ENCODE measurements at regions of chr13 and their contacts with region 1.

Region 1: DNA sequence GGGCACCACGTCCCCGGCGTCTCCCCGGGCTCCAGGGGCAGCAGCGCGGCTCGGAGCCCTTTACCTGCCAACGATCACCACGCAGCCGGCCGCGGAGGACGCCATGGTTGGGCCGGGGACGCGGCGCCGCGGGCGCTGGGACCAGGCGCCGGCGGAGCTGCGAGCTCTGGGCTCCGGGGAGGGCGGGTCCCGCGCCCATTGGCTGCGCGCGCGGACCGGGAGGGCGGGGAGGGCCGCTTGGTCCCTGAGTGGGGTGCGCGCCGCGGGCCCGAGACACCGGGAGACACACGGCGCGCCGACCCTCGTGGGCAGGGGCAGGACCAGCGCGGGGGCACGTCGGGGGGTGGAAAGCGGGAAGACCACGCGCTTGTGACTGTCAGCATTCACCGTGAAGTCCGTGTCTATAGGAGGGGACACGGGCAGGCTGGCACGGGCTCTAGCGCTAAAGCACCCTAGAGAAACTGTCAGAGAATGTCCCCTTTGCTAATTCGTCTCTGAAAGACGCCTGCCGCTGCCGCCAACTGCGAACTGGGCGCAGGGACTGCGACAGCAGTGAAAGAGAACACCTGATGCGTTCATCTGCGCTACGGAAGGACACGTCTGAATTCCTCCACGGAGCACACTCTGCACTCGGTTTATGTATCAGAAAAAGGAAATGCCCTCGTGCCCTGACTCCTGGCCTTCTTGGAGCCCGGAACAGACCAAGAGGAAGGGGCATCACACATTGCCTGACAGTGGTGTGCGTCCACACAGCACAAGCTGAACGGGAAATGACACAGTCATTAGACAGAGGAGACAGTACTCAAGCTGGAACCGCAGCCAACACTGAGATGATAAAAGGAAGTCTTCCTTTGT is at the start of gene CRYL1:
- DNase-seq: peak; percentile 69
- ATAC-seq: peak; percentile 90
- H3K4me3 Mint-ChIP-seq: peak within 1 kb of the TSS; percentile 87
- H3K27ac Mint-ChIP-seq: peak within 1 kb of the TSS; percentile 79
- H3K4me1 Mint-ChIP-seq: peaks cover 16% of the 10 kb centered on the region
- H3K27me3 Mint-ChIP-seq: no peaks in the 10 kb centered on the region
- CTCF ChIP-seq: no peak
- total RNA-seq, gene CRYL1: 9.2 and 9.6 TPM in 2 replicates

Region 2: DNA sequence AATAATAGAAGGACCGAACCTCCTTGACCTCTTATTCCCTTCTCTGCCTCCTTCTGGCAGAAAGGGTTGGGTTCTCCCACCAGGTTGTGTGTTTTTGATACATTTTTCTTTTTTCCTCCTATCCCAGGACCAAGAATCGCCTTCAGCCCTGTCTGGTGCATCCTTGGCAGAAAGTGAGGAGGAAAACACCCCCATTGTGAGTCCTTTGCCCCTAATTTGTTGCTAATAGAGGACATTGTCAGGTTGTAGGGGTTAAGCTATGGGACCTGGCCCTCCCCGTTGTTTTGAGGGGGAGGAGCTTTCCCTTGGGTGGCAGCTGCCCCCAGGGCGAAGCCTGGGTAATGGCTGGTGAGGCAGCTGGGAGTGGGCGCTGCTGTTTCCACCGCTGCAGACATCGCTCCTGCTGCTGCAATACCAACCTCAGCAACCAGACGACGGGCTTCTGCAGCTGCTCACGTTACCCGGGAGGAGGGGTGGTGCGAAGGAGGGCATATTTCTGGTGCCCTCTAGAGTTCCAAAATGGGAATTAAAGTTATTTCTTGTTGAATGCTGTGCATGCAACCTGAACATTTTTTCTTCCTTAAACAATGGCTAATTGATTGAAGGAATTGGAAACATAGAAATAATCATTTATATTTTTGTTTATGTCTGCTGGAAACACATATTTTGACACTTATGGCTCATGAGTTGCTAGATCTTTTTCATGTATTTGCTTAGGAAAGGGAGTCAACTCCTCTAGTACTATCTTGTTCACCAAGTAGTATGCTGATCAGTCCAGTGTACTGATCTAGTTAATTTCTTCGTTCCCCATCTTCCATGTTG is 565.9 kb before region 1 on chr13:
- CTCF ChIA-PET with region 1: no interaction called
- POLR2A ChIA-PET with region 1: no interaction called
- intact Hi-C with region 1: loop called (anchors 5 kb)
- DNase-seq: peak; percentile 60
- ATAC-seq: peak; percentile 43
- H3K4me3 Mint-ChIP-seq: peak overlapping the region; percentile 98
- H3K27ac Mint-ChIP-seq: peak overlapping the region; percentile 98
- H3K4me1 Mint-ChIP-seq: peaks cover 33% of the 10 kb centered on the region
- H3K27me3 Mint-ChIP-seq: no peaks in the 10 kb centered on the region
- CTCF ChIP-seq: no peak

Region 3: GRCh38 chr13:20197361-20197834 is 328.5 kb before region 1 on chr13:
- CTCF ChIA-PET with region 1: no interaction called
- POLR2A ChIA-PET with region 1: no interaction called
- intact Hi-C with region 1: no loop called
- DNase-seq: no peak
- ATAC-seq: peak; percentile 71
- H3K4me3 Mint-ChIP-seq: no peak overlapping the region
- H3K27ac Mint-ChIP-seq: no peak overlapping the region
- H3K4me1 Mint-ChIP-seq: peaks cover 16% of the 10 kb centered on the region
- H3K27me3 Mint-ChIP-seq: peaks cover 40% of the 10 kb centered on the region
- CTCF ChIP-seq: peak; percentile 6

Region 4: DNA sequence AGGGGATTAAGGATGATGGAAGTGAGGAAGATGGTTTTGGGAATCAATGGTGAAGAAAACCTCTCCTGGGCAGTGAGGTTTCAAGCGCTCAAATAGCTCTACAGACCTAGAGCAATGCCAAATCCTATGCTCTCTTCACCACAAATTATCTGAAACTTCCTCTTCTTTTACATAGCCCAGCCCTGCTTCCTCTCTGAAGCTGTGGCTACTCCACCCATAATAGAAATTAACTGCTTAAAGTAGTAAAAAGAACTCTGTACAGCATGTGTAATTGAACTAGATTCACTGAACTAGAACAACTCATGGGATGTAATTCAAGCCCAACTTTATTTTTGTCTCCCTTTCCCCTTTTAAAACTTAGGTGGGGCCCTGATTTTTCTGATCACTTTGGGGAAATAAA is 20.6 kb after region 1 on chr13:
- CTCF ChIA-PET with region 1: interaction called, 3 read pairs
- POLR2A ChIA-PET with region 1: interaction called, 36 read pairs
- intact Hi-C with region 1: loop called (anchors 1 kb)
- DNase-seq: no peak
- ATAC-seq: peak; percentile 63
- H3K4me3 Mint-ChIP-seq: peak overlapping the region; percentile 29
- H3K27ac Mint-ChIP-seq: peak overlapping the region; percentile 48
- H3K4me1 Mint-ChIP-seq: peaks cover 47% of the 10 kb centered on the region
- H3K27me3 Mint-ChIP-seq: no peaks in the 10 kb centered on the region
- CTCF ChIP-seq: no peak

Region 5: GRCh38 chr13:20566898-20567874 is 41.3 kb after region 1 on chr13 and contains the start of gene IFT88:
- CTCF ChIA-PET with region 1: no interaction called
- POLR2A ChIA-PET with region 1: interaction called, 14 read pairs
- intact Hi-C with region 1: loop called (anchors 1 kb)
- DNase-seq: peak; percentile 92
- ATAC-seq: peak; percentile 90
- H3K4me3 Mint-ChIP-seq: peak within 1 kb of the TSS; percentile 92
- H3K27ac Mint-ChIP-seq: peak within 1 kb of the TSS; percentile 89
- H3K4me1 Mint-ChIP-seq: peaks cover 18% of the 10 kb centered on the region
- H3K27me3 Mint-ChIP-seq: no peaks in the 10 kb centered on the region
- CTCF ChIP-seq: no peak
- total RNA-seq, gene IFT88: 16.4 and 17.3 TPM in 2 replicates

Region 6: DNA sequence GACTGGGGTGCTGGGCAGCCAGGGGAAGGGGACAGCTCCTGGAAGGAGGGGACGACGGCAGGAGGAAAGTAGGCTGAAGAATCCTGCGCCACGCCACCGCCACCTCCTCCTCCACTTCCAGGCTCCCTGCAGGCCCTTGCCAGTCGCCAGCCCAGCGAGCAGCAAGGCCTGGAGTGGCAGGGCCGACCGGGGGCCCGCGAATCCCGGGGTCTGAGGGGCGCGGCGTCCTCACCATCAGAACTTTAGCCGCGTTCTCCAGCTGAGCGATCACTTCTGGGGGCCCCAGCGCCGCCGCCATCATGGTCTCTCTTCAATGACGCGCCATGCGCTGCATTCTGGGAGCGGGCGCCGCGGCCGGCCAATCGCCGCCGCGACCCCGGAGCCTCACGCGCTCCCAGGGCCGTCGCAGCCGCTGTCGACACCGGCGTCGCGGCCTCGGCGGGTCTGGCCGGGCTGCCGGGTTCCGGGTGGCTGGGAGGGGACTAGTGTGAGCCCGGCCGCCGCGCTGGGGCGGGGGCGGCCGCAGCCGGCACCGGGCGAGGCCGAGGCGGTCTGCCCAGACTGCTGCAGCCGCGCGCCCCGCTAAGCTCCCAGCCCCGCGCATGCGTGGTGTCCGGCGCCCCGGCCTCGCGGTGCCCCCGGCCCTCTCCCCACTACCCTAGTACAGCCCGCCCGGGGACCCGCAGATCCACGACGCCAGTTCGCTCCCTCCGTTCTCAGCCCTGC is 376.7 kb after region 1 on chr13 and contains the start of gene XPO4:
- CTCF ChIA-PET with region 1: no interaction called
- POLR2A ChIA-PET with region 1: no interaction called
- intact Hi-C with region 1: loop called (anchors 2 kb)
- DNase-seq: peak; percentile 80
- ATAC-seq: peak; percentile 93
- H3K4me3 Mint-ChIP-seq: peak within 1 kb of the TSS; percentile 91
- H3K27ac Mint-ChIP-seq: peak within 1 kb of the TSS; percentile 86
- H3K4me1 Mint-ChIP-seq: peaks cover 32% of the 10 kb centered on the region
- H3K27me3 Mint-ChIP-seq: peaks cover 2% of the 10 kb centered on the region
- CTCF ChIP-seq: no peak
- total RNA-seq, gene XPO4: 25.2 and 27.4 TPM in 2 replicates

Region 7: GRCh38 chr13:21399741-21400140 is 873.8 kb after region 1 on chr13:
- CTCF ChIA-PET with region 1: no interaction called
- POLR2A ChIA-PET with region 1: no interaction called
- intact Hi-C with region 1: no loop called
- DNase-seq: no peak
- ATAC-seq: no peak
- H3K4me3 Mint-ChIP-seq: no peak overlapping the region
- H3K27ac Mint-ChIP-seq: no peak overlapping the region
- H3K4me1 Mint-ChIP-seq: no peaks in the 10 kb centered on the region
- H3K27me3 Mint-ChIP-seq: no peaks in the 10 kb centered on the region
- CTCF ChIP-seq: no peak

Region 8: DNA sequence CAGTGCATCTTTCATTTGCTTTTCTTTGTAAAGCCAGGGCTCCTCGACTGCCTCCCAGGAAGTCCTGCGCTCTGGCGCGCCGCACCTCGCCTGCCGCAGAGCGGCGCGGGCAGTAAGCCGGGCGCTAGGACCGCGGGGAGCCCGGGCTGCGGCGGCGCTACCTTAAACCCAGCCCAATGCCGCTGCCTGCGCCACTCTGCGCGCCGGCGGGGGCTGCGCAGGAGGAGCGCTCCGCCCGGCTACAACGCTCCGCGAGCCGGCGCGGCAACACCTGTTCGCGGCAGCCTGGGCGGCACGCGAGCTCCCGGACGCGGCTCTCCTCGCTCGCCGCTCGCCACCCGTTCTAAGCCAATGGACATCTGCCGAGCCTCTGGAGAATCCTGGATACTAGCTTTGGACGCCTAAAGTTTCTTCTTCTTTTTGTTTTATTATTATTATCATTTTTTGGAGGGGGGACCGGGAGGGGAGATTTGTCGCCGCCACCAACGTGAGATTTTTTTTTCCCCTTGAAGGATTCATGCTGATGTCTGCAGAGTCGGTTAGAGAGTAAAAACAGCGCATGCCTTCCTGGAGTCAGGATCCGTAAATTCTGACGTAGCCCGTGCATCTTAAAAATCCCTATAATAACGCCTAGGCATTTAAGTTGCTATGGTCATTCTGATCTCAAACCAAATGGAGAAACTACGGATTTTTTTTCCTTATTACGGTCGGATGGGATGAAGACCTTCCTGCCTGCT is 1145.1 kb after region 1 on chr13 and contains the start of gene FGF9:
- CTCF ChIA-PET with region 1: no interaction called
- POLR2A ChIA-PET with region 1: no interaction called
- intact Hi-C with region 1: loop called (anchors 10 kb)
- DNase-seq: peak; percentile 76
- ATAC-seq: peak; percentile 77
- H3K4me3 Mint-ChIP-seq: peak within 1 kb of the TSS; percentile 85
- H3K27ac Mint-ChIP-seq: peak within 1 kb of the TSS; percentile 61
- H3K4me1 Mint-ChIP-seq: peaks cover 48% of the 10 kb centered on the region
- H3K27me3 Mint-ChIP-seq: peaks cover 43% of the 10 kb centered on the region
- CTCF ChIP-seq: no peak
- total RNA-seq, gene FGF9: 0.22 and 0.49 TPM in 2 replicates

Measured in activated B cell treated with CpG ODN at 0.5 μM for 24 hours (primary cell).